ENCODE measurements at regions of chr2 and their contacts with region 1.

Region 1: GRCh38 chr2:62014102-62014501 is 108.6 kb downstream of the COMMD1 start:
- DNase-seq: peak; percentile 75 to 90
- H3K4me3 ChIP-seq: no peak overlapping the region
- H3K27ac ChIP-seq: peak overlapping the region; percentile 27 to 42
- H3K4me1 ChIP-seq: peaks cover 0 to 31% (median 9%) of the 10 kb centered on the region in 4 donors
- H3K27me3 ChIP-seq: no peaks in the 10 kb centered on the region
- CTCF ChIP-seq: peak; percentile 38 to 45

Region 2: GRCh38 chr2:62071126-62071598 is 57.1 kb after region 1 on chr2:
- intact Hi-C with region 1: loop called (anchors 10 kb)
- DNase-seq: no peak
- H3K4me3 ChIP-seq: no peak overlapping the region
- H3K27ac ChIP-seq: no peak overlapping the region
- H3K4me1 ChIP-seq: peaks cover 0 to 2% (median 0%) of the 10 kb centered on the region in 4 donors
- H3K27me3 ChIP-seq: no peaks in the 10 kb centered on the region
- CTCF ChIP-seq: no peak

Region 3: GRCh38 chr2:62186156-62186905 is 172.2 kb after region 1 on chr2:
- intact Hi-C with region 1: loop called (anchors 10 kb)
- DNase-seq: no peak
- H3K4me3 ChIP-seq: no peak overlapping the region
- H3K27ac ChIP-seq: no peak overlapping the region
- H3K4me1 ChIP-seq: peaks cover 0 to 14% (median 10%) of the 10 kb centered on the region in 4 donors
- H3K27me3 ChIP-seq: no peaks in the 10 kb centered on the region
- CTCF ChIP-seq: no peak